CD4-positive, alpha-beta memory T cell (primary cell): ENCODE measurements at regions of chr1 and their contacts with region 1.

Region 1: DNA sequence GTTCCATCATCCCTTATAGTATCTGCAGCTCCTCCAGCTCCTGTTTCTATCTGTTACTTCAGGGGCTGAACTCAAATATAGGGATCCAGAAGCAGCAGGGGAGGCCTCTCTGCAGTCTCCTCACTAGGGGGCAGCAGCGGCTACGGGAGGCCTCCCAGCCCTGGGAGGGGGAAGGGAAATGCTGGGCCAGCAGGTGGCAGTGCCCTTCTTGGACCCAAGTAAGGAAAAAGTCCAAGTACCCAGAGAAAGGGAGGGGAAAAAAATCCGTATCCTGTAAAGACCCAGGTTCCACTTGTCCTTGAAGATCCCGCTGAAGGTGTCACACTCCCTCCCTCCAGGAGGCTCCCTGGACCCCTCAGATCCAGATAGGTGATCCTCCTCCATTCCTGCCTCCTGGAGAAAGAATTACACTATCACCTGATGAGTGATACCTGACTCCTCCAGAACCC is 14.1 kb upstream of the NUAK2 start:
- DNase-seq: peak; percentile 68 to 72 (median 70)
- H3K4me3 ChIP-seq: no peak overlapping the region
- H3K4me3 Mint-ChIP-seq: no peak overlapping the region
- H3K27ac ChIP-seq: no peak overlapping the region
- H3K27ac Mint-ChIP-seq: no peak overlapping the region
- H3K4me1 ChIP-seq: no peaks in the 10 kb centered on the region
- H3K4me1 Mint-ChIP-seq: peaks cover 0 to 2% (median 0%) of the 10 kb centered on the region in 4 donors
- H3K27me3 ChIP-seq: no peaks in the 10 kb centered on the region
- H3K27me3 Mint-ChIP-seq: peaks cover 0 to 2% of the 10 kb centered on the region in 2 donors

Region 2: GRCh38 chr1:205348881-205349477 is 13.3 kb after region 1 on chr1:
- CTCF ChIA-PET with region 1: interaction called, 21 read pairs
- POLR2A ChIA-PET with region 1: interaction called, 3 read pairs
- intact Hi-C with region 1: no loop called
- DNase-seq: no peak
- H3K4me3 ChIP-seq: no peak overlapping the region
- H3K4me3 Mint-ChIP-seq: no peak overlapping the region
- H3K27ac ChIP-seq: no peak overlapping the region
- H3K27ac Mint-ChIP-seq: no peak overlapping the region
- H3K4me1 ChIP-seq: peaks cover 7% of the 10 kb centered on the region
- H3K4me1 Mint-ChIP-seq: peaks cover 7 to 9% (median 8%) of the 10 kb centered on the region in 4 donors
- H3K27me3 ChIP-seq: peaks cover 14% of the 10 kb centered on the region
- H3K27me3 Mint-ChIP-seq: peaks cover 19 to 40% of the 10 kb centered on the region in 2 donors

Region 3: DNA sequence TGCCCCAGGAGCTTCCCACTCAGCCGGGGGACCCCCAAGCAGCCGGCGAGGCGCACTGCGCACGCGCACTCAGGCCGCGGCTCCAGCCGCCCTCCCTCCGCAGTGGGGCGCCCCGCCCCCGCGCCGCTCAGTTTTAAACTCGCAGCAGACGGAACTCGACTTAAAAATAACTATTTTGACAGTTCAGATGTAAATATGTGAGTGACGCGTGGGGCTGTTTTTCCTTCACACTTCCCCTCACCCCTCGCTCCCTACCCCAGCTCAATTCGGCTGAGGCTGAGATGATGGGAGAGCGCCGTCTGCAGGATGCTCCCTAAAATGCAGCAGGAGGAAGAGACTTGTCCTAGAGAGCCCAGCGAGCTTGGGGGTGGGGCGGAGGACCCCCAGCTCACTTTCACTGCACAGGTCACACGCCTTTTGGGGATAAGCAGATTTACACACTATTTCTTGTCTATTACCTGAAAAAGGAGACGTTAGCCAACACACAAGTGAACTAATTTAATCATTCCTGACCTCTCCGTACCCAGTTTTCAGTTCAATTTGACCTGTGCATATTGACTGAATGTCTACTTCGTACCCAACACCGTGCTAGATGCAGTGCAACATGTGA is 95.1 kb after region 1 on chr1:
- CTCF ChIA-PET with region 1: interaction called, 17 read pairs
- POLR2A ChIA-PET with region 1: no interaction called
- intact Hi-C with region 1: loop called (anchors 2 kb)
- DNase-seq: peak; percentile 46 to 69 (median 53)
- H3K4me3 ChIP-seq: peak overlapping the region; percentile 41 to 55
- H3K4me3 Mint-ChIP-seq: peak overlapping the region; percentile 81 to 91 (median 84)
- H3K27ac ChIP-seq: no peak overlapping the region
- H3K27ac Mint-ChIP-seq: peak overlapping the region in 5 of 7 donors; percentile 34 to 83 (median 59)
- H3K4me1 ChIP-seq: peaks cover 10% of the 10 kb centered on the region
- H3K4me1 Mint-ChIP-seq: peaks cover 8 to 17% (median 13%) of the 10 kb centered on the region in 4 donors
- H3K27me3 ChIP-seq: no peaks in the 10 kb centered on the region
- H3K27me3 Mint-ChIP-seq: peaks cover 10 to 11% of the 10 kb centered on the region in 2 donors